ENCODE measurements at regions of chr4 and their contacts with region 1.

Region 1: GRCh38 chr4:17433827-17434226 is 78.1 kb downstream of the QDPR start:
- DNase-seq: no peak
- ATAC-seq: no peak
- H3K4me3 ChIP-seq: no peak overlapping the region
- H3K4me3 Mint-ChIP-seq: no peak overlapping the region
- H3K27ac ChIP-seq: no peak overlapping the region
- H3K27ac Mint-ChIP-seq: no peak overlapping the region
- H3K4me1 ChIP-seq: no peaks in the 10 kb centered on the region
- H3K4me1 Mint-ChIP-seq: no peaks in the 10 kb centered on the region
- H3K27me3 ChIP-seq: no peaks in the 10 kb centered on the region
- H3K27me3 Mint-ChIP-seq: peaks cover 0 to 1% of the 10 kb centered on the region in 2 donors

Region 2: GRCh38 chr4:16289897-16290554 is 1143.8 kb before region 1 on chr4:
- CTCF ChIA-PET with region 1: interaction called in 1 of 2 experiments, 10 read pairs
- POLR2A ChIA-PET with region 1: no interaction called
- DNase-seq: peak in 1 of 35 experiments; percentile 46
- ATAC-seq: no peak
- H3K4me3 ChIP-seq: no peak overlapping the region
- H3K4me3 Mint-ChIP-seq: no peak overlapping the region
- H3K27ac ChIP-seq: no peak overlapping the region
- H3K27ac Mint-ChIP-seq: no peak overlapping the region
- H3K4me1 ChIP-seq: no peaks in the 10 kb centered on the region
- H3K4me1 Mint-ChIP-seq: peaks cover 4 to 6% (median 5%) of the 10 kb centered on the region in 3 donors
- H3K27me3 ChIP-seq: no peaks in the 10 kb centered on the region
- H3K27me3 Mint-ChIP-seq: peaks cover 11 to 25% of the 10 kb centered on the region in 2 donors

Region 3: DNA sequence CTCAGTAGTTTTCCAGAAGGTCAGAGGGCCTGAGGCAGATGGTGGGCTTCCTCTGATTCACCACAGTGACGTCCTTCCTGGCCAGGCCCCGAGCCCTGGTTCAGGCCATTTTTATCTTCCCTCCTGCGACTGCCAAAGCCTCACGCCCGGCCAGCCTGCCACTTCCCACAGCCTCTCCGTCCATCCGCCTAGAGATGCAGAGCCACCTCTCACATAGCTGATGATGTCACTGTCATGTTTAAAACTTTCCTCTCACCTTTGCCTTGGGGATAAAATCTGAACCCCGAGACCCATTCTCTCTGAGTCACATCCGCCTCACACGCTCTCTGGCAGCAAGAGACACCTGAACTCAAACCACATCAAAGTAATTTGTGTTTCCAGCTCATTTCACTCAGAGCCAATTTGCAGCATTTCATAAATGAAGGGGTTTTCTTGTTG is 97.3 kb before region 1 on chr4:
- CTCF ChIA-PET with region 1: no interaction called
- POLR2A ChIA-PET with region 1: no interaction called
- DNase-seq: peak; percentile 42 to 87 (median 64)
- ATAC-seq: peak; percentile 96 to 99 (median 98)
- H3K4me3 ChIP-seq: no peak overlapping the region
- H3K4me3 Mint-ChIP-seq: peak overlapping the region in 2 of 3 donors; percentile 22 to 37
- H3K27ac ChIP-seq: peak overlapping the region; percentile 63
- H3K27ac Mint-ChIP-seq: peak overlapping the region; percentile 71 to 88
- H3K4me1 ChIP-seq: peaks cover 12 to 23% of the 10 kb centered on the region in 2 experiments
- H3K4me1 Mint-ChIP-seq: peaks cover 24 to 33% (median 31%) of the 10 kb centered on the region in 3 donors
- H3K27me3 ChIP-seq: no peaks in the 10 kb centered on the region
- H3K27me3 Mint-ChIP-seq: no peaks in the 10 kb centered on the region